A673 (cell line): ENCODE measurements at regions of chr1 and their contacts with region 1.

Region 1: GRCh38 chr1:84442256-84442655 is 36.8 kb upstream of the RPF1 start:
- DNase-seq: peak; percentile 77
- H3K4me3 ChIP-seq: no peak overlapping the region
- H3K27ac ChIP-seq: no peak overlapping the region
- H3K4me1 ChIP-seq: no peaks in the 10 kb centered on the region
- H3K27me3 ChIP-seq: no peaks in the 10 kb centered on the region
- CTCF ChIP-seq: peak; percentile 63

Region 2: DNA sequence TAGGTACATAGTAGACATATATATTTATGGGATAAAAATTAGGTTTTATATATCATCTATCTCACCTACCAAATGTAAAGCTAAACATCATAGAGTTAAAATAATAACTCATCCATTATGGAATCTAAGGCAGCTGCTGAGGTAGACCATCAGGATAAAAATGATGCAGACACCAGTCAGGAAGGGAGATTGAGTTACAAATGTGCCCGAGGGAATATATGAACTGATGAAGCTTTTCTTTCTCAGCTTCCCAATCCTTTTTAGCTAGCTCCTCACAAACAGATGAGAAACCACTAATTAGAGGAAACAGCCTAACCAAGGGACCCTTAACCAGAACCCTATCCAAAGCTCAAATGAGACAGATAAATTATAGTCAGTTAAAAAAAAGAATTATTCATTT is 464.2 kb before region 1 on chr1:
- CTCF ChIA-PET with region 1: no interaction called
- POLR2A ChIA-PET with region 1: no interaction called
- intact Hi-C with region 1: no loop called
- DNase-seq: peak; percentile 28
- H3K4me3 ChIP-seq: no peak overlapping the region
- H3K27ac ChIP-seq: no peak overlapping the region
- H3K4me1 ChIP-seq: peaks cover 3% of the 10 kb centered on the region
- H3K27me3 ChIP-seq: no peaks in the 10 kb centered on the region
- CTCF ChIP-seq: no peak

Region 3: GRCh38 chr1:84427520-84428188 is 14.6 kb before region 1 on chr1:
- CTCF ChIA-PET with region 1: no interaction called
- POLR2A ChIA-PET with region 1: no interaction called
- intact Hi-C with region 1: no loop called
- DNase-seq: no peak
- H3K4me3 ChIP-seq: no peak overlapping the region
- H3K27ac ChIP-seq: no peak overlapping the region
- H3K4me1 ChIP-seq: no peaks in the 10 kb centered on the region
- H3K27me3 ChIP-seq: no peaks in the 10 kb centered on the region
- CTCF ChIP-seq: no peak

Region 4: GRCh38 chr1:84541679-84542078 is 99.4 kb after region 1 on chr1:
- CTCF ChIA-PET with region 1: no interaction called
- POLR2A ChIA-PET with region 1: no interaction called
- intact Hi-C with region 1: loop called (anchors 10 kb)
- DNase-seq: no peak
- H3K4me3 ChIP-seq: no peak overlapping the region
- H3K27ac ChIP-seq: no peak overlapping the region
- H3K4me1 ChIP-seq: peaks cover 6% of the 10 kb centered on the region
- H3K27me3 ChIP-seq: no peaks in the 10 kb centered on the region
- CTCF ChIP-seq: peak; percentile 48

Region 5: GRCh38 chr1:84772428-84772943 is 330.2 kb after region 1 on chr1:
- CTCF ChIA-PET with region 1: interaction called, 3 read pairs
- POLR2A ChIA-PET with region 1: no interaction called
- intact Hi-C with region 1: loop called (anchors 5 kb)
- DNase-seq: peak; percentile 85
- H3K4me3 ChIP-seq: no peak overlapping the region
- H3K27ac ChIP-seq: no peak overlapping the region
- H3K4me1 ChIP-seq: no peaks in the 10 kb centered on the region
- H3K27me3 ChIP-seq: peaks cover 3% of the 10 kb centered on the region
- CTCF ChIP-seq: peak; percentile 92

Region 6: GRCh38 chr1:84785271-84786036 is 343.2 kb after region 1 on chr1:
- CTCF ChIA-PET with region 1: no interaction called
- POLR2A ChIA-PET with region 1: no interaction called
- intact Hi-C with region 1: no loop called
- DNase-seq: no peak
- H3K4me3 ChIP-seq: no peak overlapping the region
- H3K27ac ChIP-seq: no peak overlapping the region
- H3K4me1 ChIP-seq: peaks cover 7% of the 10 kb centered on the region
- H3K27me3 ChIP-seq: peaks cover 30% of the 10 kb centered on the region
- CTCF ChIP-seq: no peak